Posterior vena cava (tissue), 2 donors: ENCODE measurements at regions of chr12 and their contacts with region 1.

Region 1: DNA sequence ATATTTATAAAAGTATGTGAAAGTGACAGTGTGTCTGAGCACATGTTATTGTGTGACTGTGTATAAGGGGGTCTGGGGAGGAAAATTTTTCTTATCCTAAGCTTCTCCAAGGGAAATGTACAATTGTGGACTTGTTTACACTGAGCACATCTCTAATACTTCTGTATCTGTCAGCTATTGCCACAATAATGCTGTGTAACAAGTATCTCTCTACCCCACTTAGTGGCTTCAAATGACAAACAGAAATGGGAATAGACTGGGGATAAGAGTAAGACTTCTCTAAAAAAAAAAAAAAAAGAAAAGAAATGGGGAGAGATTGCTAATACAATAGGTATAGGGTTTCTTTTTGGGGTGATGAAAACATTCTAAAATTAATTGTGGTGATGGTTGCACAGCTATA is 44.3 kb upstream of the CCDC63 start:
- DNase-seq: no peak

Region 2: GRCh38 chr12:108980831-108981618 is 1821.5 kb before region 1 on chr12:
- intact Hi-C with region 1: no loop called
- DNase-seq: no peak

Region 3: DNA sequence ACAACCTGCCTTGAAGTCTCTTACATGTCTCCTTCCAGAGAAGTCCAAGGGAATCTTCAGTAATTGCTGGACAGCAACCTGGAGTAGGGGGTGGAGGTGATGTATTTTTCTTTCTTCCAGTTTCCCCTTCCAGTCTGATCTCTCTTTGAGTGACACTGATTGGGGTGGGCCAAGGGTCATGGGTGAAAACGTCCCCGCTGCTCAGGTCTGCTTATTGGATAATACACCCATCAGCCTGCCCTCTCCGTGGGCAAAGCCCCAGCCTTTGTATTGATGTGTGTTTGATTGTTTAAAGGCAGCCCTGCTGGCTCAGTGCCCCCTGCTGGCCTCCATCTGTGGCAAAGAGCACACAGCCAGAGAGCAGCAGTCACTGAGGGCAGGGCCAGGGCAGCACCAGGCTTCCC is 557.1 kb before region 1 on chr12:
- intact Hi-C with region 1: no loop called
- DNase-seq: no peak

Region 4: GRCh38 chr12:110853836-110854235 is 51.3 kb after region 1 on chr12:
- intact Hi-C with region 1: no loop called
- DNase-seq: no peak

Region 5: GRCh38 chr12:111993292-111994150 is 1191.0 kb after region 1 on chr12:
- intact Hi-C with region 1: loop called in 1 of 2 experiments (anchors 5 kb)
- DNase-seq: no peak